ENCODE measurements at regions of chr1 and their contacts with region 1.

Region 1: GRCh38 chr1:197521118-197521739 is 253.2 kb downstream of the CRB1 start:
- DNase-seq: no peak
- H3K4me3 ChIP-seq: no peak overlapping the region
- CTCF ChIP-seq: no peak
- POLR2A ChIP-seq: no peak

Region 2: GRCh38 chr1:197736644-197737043 is 215.4 kb after region 1 on chr1:
- intact Hi-C with region 1: no loop called
- DNase-seq: no peak
- H3K4me3 ChIP-seq: no peak overlapping the region
- CTCF ChIP-seq: no peak
- POLR2A ChIP-seq: no peak

Region 3: GRCh38 chr1:197915862-197916499 is 394.8 kb after region 1 on chr1:
- intact Hi-C with region 1: loop called (anchors 10 kb)
- DNase-seq: peak in 1 of 2 donors; percentile 84
- H3K4me3 ChIP-seq: no peak overlapping the region
- CTCF ChIP-seq: no peak
- POLR2A ChIP-seq: no peak

Region 4: DNA sequence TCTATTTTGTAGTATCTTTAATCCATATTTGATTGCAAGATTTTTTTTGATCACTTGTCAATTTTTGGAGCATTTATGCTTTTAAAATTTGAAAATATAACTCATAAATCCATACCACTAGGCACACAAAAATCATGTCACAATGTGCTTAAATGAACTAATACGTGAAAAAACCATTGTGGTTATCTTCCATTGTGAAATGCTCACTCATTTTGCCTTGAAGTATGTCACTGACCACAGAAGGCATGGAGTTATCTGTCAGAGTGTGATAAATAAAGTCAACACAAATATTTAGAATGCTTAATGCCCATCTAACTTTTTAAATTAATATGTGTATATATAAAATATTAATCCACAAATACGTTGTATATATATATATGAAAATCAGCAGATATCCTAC is 1464.8 kb after region 1 on chr1:
- intact Hi-C with region 1: no loop called
- DNase-seq: no peak
- H3K4me3 ChIP-seq: no peak overlapping the region
- CTCF ChIP-seq: no peak
- POLR2A ChIP-seq: no peak